ENCODE measurements at regions of chr13 and their contacts with region 1.

Region 1: DNA sequence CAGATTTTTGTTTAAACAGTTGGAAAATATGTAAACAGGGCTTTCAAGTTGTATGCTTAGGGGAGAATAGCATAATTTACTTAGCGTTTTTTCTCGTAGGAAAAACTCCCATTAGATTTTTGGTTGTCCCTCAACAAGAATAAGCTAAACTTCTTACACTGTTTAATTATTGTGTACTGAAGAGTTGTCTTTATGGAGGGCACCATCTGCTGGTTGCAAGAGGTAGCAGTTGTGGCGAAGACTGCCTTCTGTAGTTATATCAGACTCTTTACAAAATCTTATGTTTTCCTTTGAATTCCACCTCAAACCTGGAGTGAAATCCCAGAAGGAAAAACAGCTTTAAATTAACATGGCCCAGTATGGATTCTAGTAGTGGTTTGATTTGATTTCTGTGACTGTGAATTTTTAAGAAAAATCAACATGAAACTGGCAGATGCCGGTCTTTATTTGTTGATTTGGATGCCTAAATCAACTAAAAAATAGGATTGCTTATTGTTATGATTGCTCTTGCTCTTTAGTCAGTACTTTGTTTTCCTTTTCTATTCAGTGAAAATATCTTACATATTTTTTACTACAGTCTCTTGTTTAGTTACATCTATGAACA is 53.4 kb downstream of the PDS5B start:
- DNase-seq: no peak
- H3K4me3 ChIP-seq: no peak overlapping the region
- H3K27ac ChIP-seq: no peak overlapping the region
- H3K4me1 ChIP-seq: no peaks in the 10 kb centered on the region
- H3K27me3 ChIP-seq: no peaks in the 10 kb centered on the region
- CTCF ChIP-seq: peak in 2 of 3 experiments; percentile 62 to 69; a peak in 3 of 4 replicates
- EP300 ChIP-seq: no peak
- POLR2A ChIP-seq: no peak
- RAD21 ChIP-seq: peak; percentile 66 to 73

Region 2: DNA sequence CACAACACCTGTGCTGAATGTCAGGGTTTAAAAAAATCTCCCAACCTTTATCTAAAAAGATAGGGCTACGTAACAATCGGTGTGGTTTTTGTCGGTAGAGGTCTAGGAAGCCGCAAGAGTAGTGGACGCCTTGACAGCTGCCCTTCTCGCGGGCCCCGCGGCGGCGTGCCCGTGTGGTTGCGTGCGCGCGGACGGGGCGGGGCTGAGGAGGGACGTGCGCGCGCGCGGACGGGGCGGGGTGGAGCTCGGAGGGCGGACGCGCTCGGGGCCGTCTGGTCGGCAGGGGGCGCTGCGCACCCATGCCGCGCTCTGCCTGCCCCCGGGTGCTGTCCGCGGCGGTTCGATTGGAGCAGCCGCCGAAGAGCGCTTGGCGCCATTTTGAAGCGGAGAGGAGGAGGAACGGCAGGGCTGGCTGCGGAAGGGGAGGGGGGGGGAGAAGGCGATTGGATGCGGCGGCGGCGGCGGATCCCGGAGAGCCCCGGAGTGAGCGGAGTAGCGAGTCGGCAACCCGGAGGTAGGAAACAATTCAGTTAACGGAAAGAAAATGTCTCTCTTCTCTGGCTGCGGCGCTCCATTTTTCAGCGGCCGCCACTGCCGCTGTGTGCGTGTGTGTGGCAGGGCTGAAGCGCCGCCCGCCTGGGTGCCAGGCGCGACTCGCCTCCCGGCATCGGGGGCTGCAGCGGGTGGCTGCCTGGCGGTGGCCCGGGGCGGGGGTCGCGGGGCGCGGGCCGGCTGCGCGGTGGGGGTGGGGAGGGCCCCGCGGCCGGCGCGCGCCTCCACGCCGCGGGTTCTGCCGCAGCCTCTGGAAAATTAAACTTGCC is 53.3 kb before region 1 on chr13 and contains the start of gene PDS5B:
- CTCF ChIA-PET with region 1: interaction called, 21 read pairs
- POLR2A ChIA-PET with region 1: interaction called, 7 read pairs
- DNase-seq: peak; percentile 78 to 96
- H3K4me3 ChIP-seq: peak within 1 kb of the TSS; percentile 70 to 99 (median 96)
- H3K27ac ChIP-seq: peak within 1 kb of the TSS; percentile 79
- H3K4me1 ChIP-seq: peaks cover 0 to 5% (median 2%) of the 10 kb centered on the region in 4 experiments; a peak in 1 of 7 replicates
- H3K27me3 ChIP-seq: no peaks in the 10 kb centered on the region
- CTCF ChIP-seq: peak; percentile 79 to 89 (median 86)
- EP300 ChIP-seq: no peak
- POLR2A ChIP-seq: peak in 1 of 2 experiments; percentile 22; a peak in 2 of 3 replicates
- RAD21 ChIP-seq: peak; percentile 80 to 86
- total RNA-seq, gene PDS5B: 54.6 and 59.1 TPM in 2 replicates

Region 3: GRCh38 chr13:32624441-32624840 is 15.2 kb before region 1 on chr13:
- CTCF ChIA-PET with region 1: interaction called, 12 read pairs
- POLR2A ChIA-PET with region 1: interaction called, 3 read pairs
- DNase-seq: no peak
- H3K4me3 ChIP-seq: no peak overlapping the region
- H3K27ac ChIP-seq: no peak overlapping the region
- H3K4me1 ChIP-seq: peaks cover 0 to 5% (median 2%) of the 10 kb centered on the region in 4 experiments; a peak in 4 of 7 replicates
- H3K27me3 ChIP-seq: no peaks in the 10 kb centered on the region
- CTCF ChIP-seq: no peak
- EP300 ChIP-seq: no peak
- POLR2A ChIP-seq: no peak
- RAD21 ChIP-seq: no peak

Region 4: GRCh38 chr13:32824671-32825070 is 185.1 kb after region 1 on chr13:
- CTCF ChIA-PET with region 1: no interaction called
- POLR2A ChIA-PET with region 1: no interaction called
- DNase-seq: peak in 1 of 2 experiments; percentile 57
- H3K4me3 ChIP-seq: no peak overlapping the region
- H3K27ac ChIP-seq: no peak overlapping the region
- H3K4me1 ChIP-seq: peaks cover 0 to 9% (median 6%) of the 10 kb centered on the region in 4 experiments; a peak in 4 of 7 replicates
- H3K27me3 ChIP-seq: no peaks in the 10 kb centered on the region
- CTCF ChIP-seq: no peak
- EP300 ChIP-seq: no peak
- POLR2A ChIP-seq: no peak
- RAD21 ChIP-seq: no peak

Measured in H1 (cell line).